ENCODE measurements at regions of chr3 and their contacts with region 1.

Region 1: GRCh38 chr3:40971191-40972168 is 227.8 kb upstream of the CTNNB1 start:
- DNase-seq: peak; percentile 93
- ATAC-seq: peak; percentile 94
- H3K4me3 ChIP-seq: no peak overlapping the region
- H3K27ac ChIP-seq: peak overlapping the region; percentile 78
- H3K4me1 ChIP-seq: peaks cover 31% of the 10 kb centered on the region
- H3K27me3 ChIP-seq: no peaks in the 10 kb centered on the region
- CTCF ChIP-seq: peak; percentile 18 to 37 (median 36); a peak in 4 of 6 replicates
- EP300 ChIP-seq: peak; percentile 89 to 90; a peak in 2 of 4 replicates
- POLR2A ChIP-seq: 0 out of 2 replicates have a peak, but pooled peaks have one; percentile 18
- RAD21 ChIP-seq: peak; percentile 72

Region 2: DNA sequence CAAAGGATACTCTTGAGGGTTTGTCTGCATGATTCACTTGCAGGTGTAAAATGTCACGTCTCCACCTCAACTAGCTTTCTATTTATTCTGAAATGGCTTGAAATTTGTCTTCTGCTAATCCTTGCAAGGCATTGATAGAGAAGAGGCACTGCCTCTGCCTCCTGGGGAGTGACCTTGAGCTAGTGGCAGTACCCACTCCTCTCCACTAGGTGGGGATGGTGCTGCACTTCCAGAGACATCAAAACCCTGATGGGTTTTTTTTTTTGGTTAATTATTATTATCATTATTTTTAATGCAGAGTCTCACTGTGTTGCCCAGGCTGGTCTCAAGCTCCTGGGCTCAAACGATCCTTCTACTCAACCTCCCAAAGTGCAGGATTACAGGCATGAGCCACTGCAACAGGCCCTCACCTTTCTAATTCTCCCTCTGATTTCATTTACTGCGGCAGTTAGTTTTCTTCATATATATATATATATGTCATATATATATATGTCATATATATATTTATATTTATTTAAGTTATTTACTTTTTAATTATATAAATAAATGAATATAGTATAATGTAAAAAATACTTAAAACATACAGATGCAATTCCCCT is 779.5 kb before region 1 on chr3:
- CTCF ChIA-PET with region 1: no interaction called
- POLR2A ChIA-PET with region 1: no interaction called
- RAD21 ChIA-PET with region 1: no interaction called
- SMC1A ChIA-PET with region 1: no interaction called
- in situ Hi-C with region 1: no loop called
- intact Hi-C with region 1: loop called (anchors 10 kb)
- DNase-seq: no peak
- ATAC-seq: peak; percentile 75
- H3K4me3 ChIP-seq: no peak overlapping the region
- H3K27ac ChIP-seq: no peak overlapping the region
- H3K4me1 ChIP-seq: peaks cover 18% of the 10 kb centered on the region
- H3K27me3 ChIP-seq: no peaks in the 10 kb centered on the region
- CTCF ChIP-seq: peak; percentile 86 to 95 (median 89)
- EP300 ChIP-seq: no peak
- POLR2A ChIP-seq: no peak
- RAD21 ChIP-seq: peak; percentile 89

Region 3: DNA sequence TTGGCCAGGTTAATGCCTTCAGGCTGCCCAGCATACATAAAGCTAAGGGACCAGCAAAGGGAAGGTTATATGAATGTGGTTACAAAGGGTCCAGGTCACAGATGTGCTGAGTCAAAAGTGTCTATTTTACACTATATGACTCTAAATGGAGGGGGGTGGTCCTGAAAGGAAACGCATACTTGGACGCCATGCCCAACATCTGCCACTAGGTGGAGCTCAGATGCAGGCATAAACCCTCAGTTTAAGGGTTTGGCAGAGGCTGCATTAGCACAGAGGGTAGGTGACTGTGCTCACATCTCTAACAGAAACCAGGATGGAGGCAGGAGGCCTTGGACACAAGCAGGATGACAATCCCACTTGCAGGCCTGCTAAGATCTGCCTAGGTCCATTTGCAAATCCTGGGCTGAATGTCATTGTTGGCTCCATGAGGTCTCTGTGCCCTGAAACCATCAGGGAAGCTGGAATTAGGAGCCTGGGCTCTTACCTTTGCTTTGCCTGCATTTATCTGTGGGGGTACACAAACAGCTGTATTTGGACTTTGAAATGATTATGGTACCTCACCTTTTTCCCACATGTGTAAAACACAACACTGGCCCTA is 390.9 kb before region 1 on chr3:
- CTCF ChIA-PET with region 1: interaction called, 13 read pairs
- POLR2A ChIA-PET with region 1: no interaction called
- RAD21 ChIA-PET with region 1: interaction called, 4 read pairs
- SMC1A ChIA-PET with region 1: interaction called, 6 read pairs
- in situ Hi-C with region 1: no loop called
- intact Hi-C with region 1: loop called (anchors 1 kb)
- DNase-seq: no peak
- ATAC-seq: peak; percentile 85
- H3K4me3 ChIP-seq: no peak overlapping the region
- H3K27ac ChIP-seq: no peak overlapping the region
- H3K4me1 ChIP-seq: no peaks in the 10 kb centered on the region
- H3K27me3 ChIP-seq: no peaks in the 10 kb centered on the region; a peak in 2 of 4 replicates
- CTCF ChIP-seq: peak; percentile 91 to 96 (median 93); a peak in 5 of 6 replicates
- EP300 ChIP-seq: no peak
- POLR2A ChIP-seq: no peak
- RAD21 ChIP-seq: peak; percentile 99

Region 4: DNA sequence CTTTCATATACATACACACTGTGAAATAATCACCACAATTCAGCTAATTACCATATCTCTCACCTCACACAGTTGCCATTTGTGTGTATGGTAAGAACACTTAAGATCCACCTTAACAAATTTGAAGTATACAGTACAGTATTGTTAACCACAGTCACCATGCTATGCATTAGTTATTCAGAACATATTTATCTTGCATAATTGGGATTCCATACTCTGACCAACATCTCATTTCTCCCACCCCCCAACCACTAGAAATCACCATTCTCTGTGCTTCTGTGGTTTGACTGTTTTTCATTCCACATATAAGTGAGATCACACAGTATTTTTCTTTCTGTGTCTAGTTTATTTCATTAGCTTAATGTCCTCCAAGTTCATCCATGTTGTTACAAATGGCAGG is 19.8 kb before region 1 on chr3:
- CTCF ChIA-PET with region 1: interaction called, 10 read pairs
- POLR2A ChIA-PET with region 1: no interaction called
- RAD21 ChIA-PET with region 1: no interaction called
- SMC1A ChIA-PET with region 1: no interaction called
- in situ Hi-C with region 1: no loop called
- intact Hi-C with region 1: no loop called
- DNase-seq: no peak
- ATAC-seq: no peak
- H3K4me3 ChIP-seq: no peak overlapping the region
- H3K27ac ChIP-seq: no peak overlapping the region
- H3K4me1 ChIP-seq: no peaks in the 10 kb centered on the region
- H3K27me3 ChIP-seq: no peaks in the 10 kb centered on the region
- CTCF ChIP-seq: no peak
- EP300 ChIP-seq: no peak
- POLR2A ChIP-seq: no peak
- RAD21 ChIP-seq: no peak

Region 5: GRCh38 chr3:40985194-40985593 is 13.7 kb after region 1 on chr3:
- CTCF ChIA-PET with region 1: interaction called, 4 read pairs
- POLR2A ChIA-PET with region 1: interaction called, 5 read pairs
- RAD21 ChIA-PET with region 1: interaction called, 11 read pairs
- SMC1A ChIA-PET with region 1: interaction called, 6 read pairs
- in situ Hi-C with region 1: no loop called
- intact Hi-C with region 1: no loop called
- DNase-seq: no peak
- ATAC-seq: no peak
- H3K4me3 ChIP-seq: no peak overlapping the region
- H3K27ac ChIP-seq: no peak overlapping the region
- H3K4me1 ChIP-seq: no peaks in the 10 kb centered on the region
- H3K27me3 ChIP-seq: no peaks in the 10 kb centered on the region
- CTCF ChIP-seq: no peak
- EP300 ChIP-seq: no peak
- POLR2A ChIP-seq: no peak
- RAD21 ChIP-seq: no peak

Measured in GM12878 (cell line).